B cell (primary cell): ENCODE measurements at regions of chr5 and their contacts with region 1.

Region 1: GRCh38 chr5:134527146-134527960 is 1.9 kb downstream of the JADE2 start:
- DNase-seq: peak; percentile 82
- ATAC-seq: peak; percentile 26
- H3K4me3 ChIP-seq: peak overlapping the region; percentile 70 to 100 (median 98)
- H3K4me3 Mint-ChIP-seq: peak overlapping the region; percentile 99
- H3K27ac ChIP-seq: peak overlapping the region; percentile 54 to 99
- H3K27ac Mint-ChIP-seq: peak overlapping the region; percentile 99
- H3K4me1 ChIP-seq: peaks cover 34 to 53% of the 10 kb centered on the region in 2 donors
- H3K4me1 Mint-ChIP-seq: peaks cover 57% of the 10 kb centered on the region
- H3K27me3 ChIP-seq: no peaks in the 10 kb centered on the region
- H3K27me3 Mint-ChIP-seq: no peaks in the 10 kb centered on the region
- CTCF ChIP-seq: peak; percentile 80

Region 2: GRCh38 chr5:132963175-132964104 is 1563.9 kb before region 1 on chr5 and contains the start of gene AFF4:
- CTCF ChIA-PET with region 1: no interaction called
- POLR2A ChIA-PET with region 1: no interaction called
- intact Hi-C with region 1: loop called (anchors 5 kb)
- DNase-seq: peak; percentile 96
- ATAC-seq: peak; percentile 84
- H3K4me3 ChIP-seq: peak within 1 kb of the TSS; percentile 63 to 95 (median 83)
- H3K4me3 Mint-ChIP-seq: peak within 1 kb of the TSS; percentile 97
- H3K27ac ChIP-seq: peak within 1 kb of the TSS; percentile 92 to 97
- H3K27ac Mint-ChIP-seq: peak within 1 kb of the TSS; percentile 94
- H3K4me1 ChIP-seq: peaks cover 17 to 26% of the 10 kb centered on the region in 2 donors
- H3K4me1 Mint-ChIP-seq: peaks cover 29% of the 10 kb centered on the region
- H3K27me3 ChIP-seq: no peaks in the 10 kb centered on the region
- H3K27me3 Mint-ChIP-seq: no peaks in the 10 kb centered on the region
- CTCF ChIP-seq: no peak
- total RNA-seq, gene AFF4: 81.5 and 87.4 TPM in 2 replicates

Region 3: DNA sequence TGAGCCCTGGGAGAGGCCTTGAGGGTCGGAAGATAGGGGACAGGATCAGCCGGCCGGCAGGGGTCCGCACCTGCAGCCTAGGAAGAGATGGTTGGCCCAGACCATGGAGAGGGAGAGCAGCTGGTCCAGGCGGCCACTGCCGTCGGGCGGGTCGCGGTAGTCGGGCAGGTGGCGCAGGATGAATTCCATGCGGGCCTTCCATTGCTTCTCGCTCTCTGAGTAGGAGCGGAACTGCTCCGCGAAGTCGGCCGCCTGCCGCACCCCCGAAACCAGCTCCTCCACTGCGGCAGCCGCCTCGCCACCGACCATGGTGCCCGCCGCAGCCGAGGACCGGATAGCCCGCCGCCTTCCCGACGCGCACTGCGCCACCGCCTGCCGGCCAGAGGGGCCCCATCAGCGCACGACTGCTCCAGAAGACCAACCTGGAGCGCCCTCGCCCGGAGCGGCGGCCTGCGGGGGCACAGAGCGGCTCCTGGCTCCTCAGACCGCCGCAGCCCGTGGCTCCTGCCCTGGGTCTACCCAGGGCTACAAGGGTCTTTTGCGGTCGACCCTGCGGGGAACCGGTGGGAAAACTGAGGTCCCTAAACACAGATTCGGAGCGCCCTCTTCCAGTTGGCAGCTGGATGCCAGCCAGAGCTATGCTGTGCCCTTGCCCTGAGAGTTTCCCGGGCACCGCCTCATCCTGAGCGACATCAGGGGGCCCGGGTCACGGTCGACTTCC is 115.6 kb before region 1 on chr5 and contains the start of gene CDKN2AIPNL:
- CTCF ChIA-PET with region 1: interaction called, 56 read pairs
- POLR2A ChIA-PET with region 1: interaction called, 50 read pairs
- intact Hi-C with region 1: loop called (anchors 1 kb)
- DNase-seq: peak; percentile 92
- ATAC-seq: peak; percentile 100
- H3K4me3 ChIP-seq: peak within 1 kb of the TSS; percentile 6 to 99 (median 87)
- H3K4me3 Mint-ChIP-seq: peak within 1 kb of the TSS; percentile 94
- H3K27ac ChIP-seq: peak within 1 kb of the TSS; percentile 64 to 68
- H3K27ac Mint-ChIP-seq: peak within 1 kb of the TSS; percentile 93
- H3K4me1 ChIP-seq: peaks cover 15 to 19% of the 10 kb centered on the region in 2 donors
- H3K4me1 Mint-ChIP-seq: peaks cover 39% of the 10 kb centered on the region
- H3K27me3 ChIP-seq: no peaks in the 10 kb centered on the region
- H3K27me3 Mint-ChIP-seq: no peaks in the 10 kb centered on the region
- CTCF ChIP-seq: peak; percentile 83
- total RNA-seq, gene CDKN2AIPNL: 15.8 and 17.2 TPM in 2 replicates

Region 4: GRCh38 chr5:134465816-134466240 is 61.5 kb before region 1 on chr5:
- CTCF ChIA-PET with region 1: interaction called, 8 read pairs
- POLR2A ChIA-PET with region 1: interaction called, 19 read pairs
- intact Hi-C with region 1: loop called (anchors 1 kb)
- DNase-seq: peak; percentile 65
- ATAC-seq: peak; percentile 82
- H3K4me3 ChIP-seq: peak overlapping the region; percentile 56 to 76 (median 58)
- H3K4me3 Mint-ChIP-seq: peak overlapping the region; percentile 89
- H3K27ac ChIP-seq: peak overlapping the region in 1 of 2 donors; percentile 42
- H3K27ac Mint-ChIP-seq: peak overlapping the region; percentile 87
- H3K4me1 ChIP-seq: peaks cover 26 to 36% of the 10 kb centered on the region in 2 donors
- H3K4me1 Mint-ChIP-seq: peaks cover 41% of the 10 kb centered on the region
- H3K27me3 ChIP-seq: no peaks in the 10 kb centered on the region
- H3K27me3 Mint-ChIP-seq: no peaks in the 10 kb centered on the region
- CTCF ChIP-seq: no peak

Region 5: DNA sequence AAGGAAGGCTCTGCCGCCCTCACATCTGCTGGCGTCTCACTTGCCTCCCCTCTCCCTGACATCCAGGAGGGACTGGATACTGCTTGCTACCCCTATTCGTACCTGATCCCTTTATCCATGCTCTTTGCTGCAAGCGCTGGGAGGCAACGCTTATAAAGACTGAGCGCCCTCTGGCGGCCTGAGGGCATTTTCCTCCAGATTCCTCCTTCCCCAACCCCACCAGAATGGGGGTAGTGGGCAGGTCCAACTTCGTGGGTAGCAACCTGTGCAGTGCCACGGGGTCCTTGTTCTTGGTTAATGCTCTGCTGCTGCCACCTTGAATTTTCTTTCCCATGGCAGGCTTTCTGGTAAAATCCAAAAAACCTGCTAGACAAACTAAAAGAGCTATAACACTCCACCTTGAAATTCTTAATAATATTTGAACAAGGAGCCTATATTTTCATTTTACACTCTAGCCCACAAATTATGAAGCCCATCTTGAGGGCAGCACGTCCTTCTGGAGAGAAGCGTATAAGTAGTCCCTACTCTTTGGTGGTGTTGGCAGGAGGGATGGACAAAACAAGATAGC is 50.5 kb after region 1 on chr5:
- CTCF ChIA-PET with region 1: interaction called, 30 read pairs
- POLR2A ChIA-PET with region 1: interaction called, 9 read pairs
- intact Hi-C with region 1: loop called (anchors 1 kb)
- DNase-seq: peak; percentile 84
- ATAC-seq: peak; percentile 71
- H3K4me3 ChIP-seq: no peak overlapping the region
- H3K4me3 Mint-ChIP-seq: no peak overlapping the region
- H3K27ac ChIP-seq: peak overlapping the region in 1 of 2 donors; percentile 4
- H3K27ac Mint-ChIP-seq: peak overlapping the region; percentile 60
- H3K4me1 ChIP-seq: no peaks in the 10 kb centered on the region
- H3K4me1 Mint-ChIP-seq: peaks cover 4% of the 10 kb centered on the region
- H3K27me3 ChIP-seq: no peaks in the 10 kb centered on the region
- H3K27me3 Mint-ChIP-seq: no peaks in the 10 kb centered on the region
- CTCF ChIP-seq: peak; percentile 86

Region 6: GRCh38 chr5:134648425-134649162 is 121.2 kb after region 1 on chr5 and contains the start of gene SEC24A:
- CTCF ChIA-PET with region 1: no interaction called
- POLR2A ChIA-PET with region 1: no interaction called
- intact Hi-C with region 1: loop called (anchors 1 kb)
- DNase-seq: peak; percentile 94
- ATAC-seq: peak; percentile 83
- H3K4me3 ChIP-seq: peak within 1 kb of the TSS; percentile 80 to 91 (median 88)
- H3K4me3 Mint-ChIP-seq: peak within 1 kb of the TSS; percentile 96
- H3K27ac ChIP-seq: peak within 1 kb of the TSS; percentile 94 to 99
- H3K27ac Mint-ChIP-seq: peak within 1 kb of the TSS; percentile 94
- H3K4me1 ChIP-seq: peaks cover 17 to 18% of the 10 kb centered on the region in 2 donors
- H3K4me1 Mint-ChIP-seq: peaks cover 24% of the 10 kb centered on the region
- H3K27me3 ChIP-seq: no peaks in the 10 kb centered on the region
- H3K27me3 Mint-ChIP-seq: no peaks in the 10 kb centered on the region
- CTCF ChIP-seq: no peak
- total RNA-seq, gene SEC24A: 13.0 and 14.3 TPM in 2 replicates